ENCODE measurements at regions of chr7 and their contacts with region 1.

Region 1: GRCh38 chr7:65373608-65374351 is at the start of gene ZNF92:
- DNase-seq: peak; percentile 96
- ATAC-seq: peak; percentile 98
- H3K4me3 ChIP-seq: peak within 1 kb of the TSS; percentile 88 to 99 (median 92)
- H3K4me3 Mint-ChIP-seq: peak within 1 kb of the TSS; percentile 96
- H3K27ac ChIP-seq: peak within 1 kb of the TSS; percentile 85 to 91
- H3K27ac Mint-ChIP-seq: peak within 1 kb of the TSS; percentile 95
- H3K4me1 ChIP-seq: peaks cover 23 to 31% of the 10 kb centered on the region in 2 donors
- H3K4me1 Mint-ChIP-seq: peaks cover 46% of the 10 kb centered on the region
- H3K27me3 ChIP-seq: no peaks in the 10 kb centered on the region
- H3K27me3 Mint-ChIP-seq: no peaks in the 10 kb centered on the region
- CTCF ChIP-seq: no peak
- total RNA-seq, gene ZNF92: 61.0 and 65.4 TPM in 2 replicates

Region 2: DNA sequence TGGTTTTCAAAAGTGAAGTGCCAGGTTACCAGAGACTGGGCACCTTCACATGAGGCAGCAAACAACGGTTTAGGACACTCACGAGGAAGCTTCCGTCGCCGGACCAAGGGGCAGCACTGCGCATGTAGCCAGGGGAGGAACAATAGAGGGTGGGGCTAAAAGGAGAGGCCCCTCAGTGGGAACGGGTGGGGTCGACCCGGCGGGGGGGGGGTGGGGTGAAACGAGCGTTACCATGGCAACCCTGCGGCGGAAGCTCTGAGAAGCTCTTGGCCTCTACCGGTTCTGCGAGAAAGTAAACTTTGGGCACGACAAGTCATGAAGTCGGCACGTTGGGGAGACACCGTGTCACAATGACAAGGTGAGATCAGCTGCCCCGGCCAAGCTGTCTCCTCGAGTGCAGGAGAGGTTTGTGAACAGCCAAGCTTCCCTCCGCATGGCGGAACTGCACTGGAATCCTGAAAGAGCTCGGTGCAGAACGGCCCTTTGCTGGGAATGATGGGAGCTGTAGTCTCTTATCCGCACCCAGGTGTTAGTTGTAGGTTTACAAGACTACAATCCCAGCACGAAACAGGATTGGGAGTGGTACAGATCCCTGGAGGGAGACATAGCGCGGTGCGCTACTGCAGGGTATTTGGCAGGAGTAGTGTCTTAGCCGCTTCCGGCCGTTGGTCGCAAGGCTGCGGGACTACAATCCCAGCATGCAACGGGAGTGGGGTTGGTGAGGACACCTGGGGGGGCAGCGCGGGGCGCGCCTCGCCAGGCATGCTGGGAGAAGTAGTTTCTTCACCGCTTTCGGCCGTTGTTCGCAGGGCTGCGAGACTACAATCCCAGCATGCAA is 1447.9 kb before region 1 on chr7:
- CTCF ChIA-PET with region 1: no interaction called
- POLR2A ChIA-PET with region 1: no interaction called
- intact Hi-C with region 1: loop called (anchors 5 kb)
- DNase-seq: peak; percentile 96
- ATAC-seq: peak; percentile 89
- H3K4me3 ChIP-seq: peak overlapping the region; percentile 55 to 87 (median 71)
- H3K4me3 Mint-ChIP-seq: peak overlapping the region; percentile 93
- H3K27ac ChIP-seq: peak overlapping the region; percentile 84 to 85
- H3K27ac Mint-ChIP-seq: peak overlapping the region; percentile 96
- H3K4me1 ChIP-seq: peaks cover 0 to 11% of the 10 kb centered on the region in 2 donors
- H3K4me1 Mint-ChIP-seq: peaks cover 3% of the 10 kb centered on the region
- H3K27me3 ChIP-seq: no peaks in the 10 kb centered on the region
- H3K27me3 Mint-ChIP-seq: no peaks in the 10 kb centered on the region
- CTCF ChIP-seq: no peak

Region 3: GRCh38 chr7:64307254-64308015 is 1066.3 kb before region 1 on chr7:
- CTCF ChIA-PET with region 1: no interaction called
- POLR2A ChIA-PET with region 1: no interaction called
- intact Hi-C with region 1: loop called (anchors 5 kb)
- DNase-seq: peak; percentile 96
- ATAC-seq: peak; percentile 94
- H3K4me3 ChIP-seq: peak overlapping the region; percentile 55 to 87 (median 75)
- H3K4me3 Mint-ChIP-seq: peak overlapping the region; percentile 90
- H3K27ac ChIP-seq: peak overlapping the region; percentile 82 to 92
- H3K27ac Mint-ChIP-seq: peak overlapping the region; percentile 88
- H3K4me1 ChIP-seq: peaks cover 24 to 30% of the 10 kb centered on the region in 2 donors
- H3K4me1 Mint-ChIP-seq: peaks cover 37% of the 10 kb centered on the region
- H3K27me3 ChIP-seq: no peaks in the 10 kb centered on the region
- H3K27me3 Mint-ChIP-seq: no peaks in the 10 kb centered on the region
- CTCF ChIP-seq: no peak

Region 4: GRCh38 chr7:65006094-65006992 is 367.4 kb before region 1 on chr7 and contains the start of gene ERV3-1:
- CTCF ChIA-PET with region 1: no interaction called
- POLR2A ChIA-PET with region 1: no interaction called
- intact Hi-C with region 1: loop called (anchors 10 kb)
- DNase-seq: peak; percentile 95
- ATAC-seq: peak; percentile 99
- H3K4me3 ChIP-seq: peak within 1 kb of the TSS; percentile 60 to 89 (median 87)
- H3K4me3 Mint-ChIP-seq: peak within 1 kb of the TSS; percentile 95
- H3K27ac ChIP-seq: peak within 1 kb of the TSS; percentile 84 to 96
- H3K27ac Mint-ChIP-seq: peak within 1 kb of the TSS; percentile 91
- H3K4me1 ChIP-seq: peaks cover 20 to 33% of the 10 kb centered on the region in 2 donors
- H3K4me1 Mint-ChIP-seq: peaks cover 46% of the 10 kb centered on the region
- H3K27me3 ChIP-seq: no peaks in the 10 kb centered on the region
- H3K27me3 Mint-ChIP-seq: no peaks in the 10 kb centered on the region
- CTCF ChIP-seq: no peak
- total RNA-seq, gene ERV3-1: 29.1 and 30.7 TPM in 2 replicates

Region 5: DNA sequence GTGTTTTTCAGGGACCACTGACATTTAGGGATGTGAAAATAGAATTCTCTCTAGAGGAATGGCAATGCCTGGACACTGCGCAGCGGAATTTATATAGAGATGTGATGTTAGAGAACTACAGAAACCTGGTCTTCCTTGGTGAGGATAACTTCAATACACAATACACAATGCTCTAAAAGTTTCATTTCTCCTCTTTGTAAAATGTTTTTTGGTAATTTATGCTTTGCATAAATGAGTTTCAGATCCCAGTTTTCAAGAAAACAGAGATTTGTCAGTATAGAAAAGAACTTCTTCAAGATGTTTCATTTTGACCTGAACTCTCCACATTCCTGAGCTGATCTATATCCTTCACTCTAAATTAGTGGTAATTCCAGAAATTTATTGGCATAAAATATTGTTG is 14.1 kb after region 1 on chr7:
- CTCF ChIA-PET with region 1: interaction called, 3 read pairs
- POLR2A ChIA-PET with region 1: interaction called, 12 read pairs
- intact Hi-C with region 1: loop called (anchors 1 kb)
- DNase-seq: peak; percentile 62
- ATAC-seq: peak; percentile 68
- H3K4me3 ChIP-seq: peak overlapping the region in 3 of 5 experiments; percentile 7 to 45 (median 8)
- H3K4me3 Mint-ChIP-seq: peak overlapping the region; percentile 75
- H3K27ac ChIP-seq: peak overlapping the region; percentile 26 to 77
- H3K27ac Mint-ChIP-seq: peak overlapping the region; percentile 90
- H3K4me1 ChIP-seq: peaks cover 53 to 65% of the 10 kb centered on the region in 2 donors
- H3K4me1 Mint-ChIP-seq: peaks cover 73% of the 10 kb centered on the region
- H3K27me3 ChIP-seq: no peaks in the 10 kb centered on the region
- H3K27me3 Mint-ChIP-seq: no peaks in the 10 kb centered on the region
- CTCF ChIP-seq: no peak

Region 6: DNA sequence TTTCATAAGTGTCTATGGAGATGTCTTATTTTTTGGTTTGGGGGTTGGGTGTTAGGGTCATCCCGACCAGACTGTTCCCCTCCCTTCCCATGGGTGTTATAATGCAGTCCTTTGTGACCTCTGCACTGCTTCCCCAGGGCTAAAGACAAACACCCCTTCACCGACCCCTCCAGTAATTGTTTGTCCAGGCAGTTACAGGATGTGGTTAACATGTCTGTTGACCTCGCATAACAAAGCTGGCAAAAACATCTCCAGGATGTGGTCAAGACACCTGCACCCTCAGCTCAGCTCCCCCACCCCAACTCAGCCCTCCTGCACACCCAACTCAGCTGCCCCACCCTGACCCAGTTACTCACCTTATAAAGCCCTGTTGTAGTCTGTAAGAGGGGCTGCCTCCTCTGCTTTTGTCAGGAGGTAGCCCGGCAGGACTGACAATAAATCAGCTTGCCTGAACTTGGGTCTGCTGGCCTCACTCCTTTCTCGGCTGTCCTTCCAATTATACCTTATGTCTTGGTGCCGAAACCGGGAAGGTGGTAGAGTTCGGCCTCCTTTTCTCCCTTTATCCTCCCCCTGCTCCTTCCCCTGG is 102.0 kb after region 1 on chr7:
- CTCF ChIA-PET with region 1: interaction called, 3 read pairs
- POLR2A ChIA-PET with region 1: interaction called, 10 read pairs
- intact Hi-C with region 1: no loop called
- DNase-seq: peak; percentile 68
- ATAC-seq: peak; percentile 90
- H3K4me3 ChIP-seq: peak overlapping the region in 2 of 5 experiments; percentile 8 to 49
- H3K4me3 Mint-ChIP-seq: peak overlapping the region; percentile 73
- H3K27ac ChIP-seq: peak overlapping the region; percentile 77 to 82
- H3K27ac Mint-ChIP-seq: peak overlapping the region; percentile 99
- H3K4me1 ChIP-seq: peaks cover 57 to 76% of the 10 kb centered on the region in 2 donors
- H3K4me1 Mint-ChIP-seq: peaks cover 81% of the 10 kb centered on the region
- H3K27me3 ChIP-seq: no peaks in the 10 kb centered on the region
- H3K27me3 Mint-ChIP-seq: no peaks in the 10 kb centered on the region
- CTCF ChIP-seq: no peak

Region 7: DNA sequence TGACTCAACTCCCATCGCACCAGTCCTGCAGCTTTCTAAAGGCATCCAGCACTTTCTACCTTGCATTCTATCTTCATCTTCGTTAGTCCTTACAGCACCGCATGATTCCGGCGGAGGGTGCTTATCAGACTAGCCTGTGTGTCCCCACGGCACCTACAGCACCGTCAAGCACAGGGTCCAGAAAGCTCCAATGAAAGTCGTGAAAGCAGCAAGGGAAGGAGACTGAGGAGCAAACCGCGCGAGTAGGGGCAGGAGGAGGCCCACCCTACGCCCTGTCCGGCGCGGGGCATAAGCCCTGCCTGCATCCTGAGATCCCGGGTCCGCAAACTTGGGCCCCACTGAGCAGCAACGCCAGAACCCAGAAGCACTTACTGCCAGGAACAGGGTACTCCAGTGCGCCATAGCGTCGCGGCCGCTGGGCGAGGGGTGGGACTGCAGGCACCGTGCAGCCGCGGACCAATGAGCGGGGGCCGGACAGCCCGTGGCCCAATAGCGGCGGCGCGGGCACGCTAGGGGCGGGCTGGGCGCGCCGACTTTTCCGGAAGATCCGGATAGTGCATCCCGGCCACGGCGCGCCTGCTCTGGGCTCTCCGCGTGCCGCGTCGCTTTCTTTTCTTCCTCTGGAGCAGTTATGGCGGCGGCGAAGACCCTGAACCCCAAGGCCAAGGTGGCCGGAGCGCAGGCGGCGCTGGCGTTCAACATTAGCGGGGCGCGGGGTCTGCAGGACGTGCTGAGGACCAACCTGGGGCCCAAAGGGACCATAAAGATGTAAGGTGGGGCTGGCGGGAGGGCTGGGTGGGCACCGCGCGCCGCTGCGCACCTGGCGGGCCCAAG is 376.9 kb after region 1 on chr7:
- CTCF ChIA-PET with region 1: no interaction called
- POLR2A ChIA-PET with region 1: no interaction called
- intact Hi-C with region 1: loop called (anchors 1 kb)
- DNase-seq: peak; percentile 89
- ATAC-seq: peak; percentile 99
- H3K4me3 ChIP-seq: peak overlapping the region; percentile 43 to 88 (median 75)
- H3K4me3 Mint-ChIP-seq: peak overlapping the region; percentile 97
- H3K27ac ChIP-seq: peak overlapping the region; percentile 41 to 69
- H3K27ac Mint-ChIP-seq: peak overlapping the region; percentile 86
- H3K4me1 ChIP-seq: peaks cover 3 to 15% of the 10 kb centered on the region in 2 donors
- H3K4me1 Mint-ChIP-seq: peaks cover 16% of the 10 kb centered on the region
- H3K27me3 ChIP-seq: no peaks in the 10 kb centered on the region
- H3K27me3 Mint-ChIP-seq: no peaks in the 10 kb centered on the region
- CTCF ChIP-seq: no peak